Activated naive CD4-positive, alpha-beta T cell treated with anti-CD3 and anti-CD28 coated beads, Interleukin-2, amount 10 ng/mL, durations not matched to agents 7 days and 5 days (primary cell): ENCODE measurements at regions of chr14 and their contacts with region 1.

Region 1: DNA sequence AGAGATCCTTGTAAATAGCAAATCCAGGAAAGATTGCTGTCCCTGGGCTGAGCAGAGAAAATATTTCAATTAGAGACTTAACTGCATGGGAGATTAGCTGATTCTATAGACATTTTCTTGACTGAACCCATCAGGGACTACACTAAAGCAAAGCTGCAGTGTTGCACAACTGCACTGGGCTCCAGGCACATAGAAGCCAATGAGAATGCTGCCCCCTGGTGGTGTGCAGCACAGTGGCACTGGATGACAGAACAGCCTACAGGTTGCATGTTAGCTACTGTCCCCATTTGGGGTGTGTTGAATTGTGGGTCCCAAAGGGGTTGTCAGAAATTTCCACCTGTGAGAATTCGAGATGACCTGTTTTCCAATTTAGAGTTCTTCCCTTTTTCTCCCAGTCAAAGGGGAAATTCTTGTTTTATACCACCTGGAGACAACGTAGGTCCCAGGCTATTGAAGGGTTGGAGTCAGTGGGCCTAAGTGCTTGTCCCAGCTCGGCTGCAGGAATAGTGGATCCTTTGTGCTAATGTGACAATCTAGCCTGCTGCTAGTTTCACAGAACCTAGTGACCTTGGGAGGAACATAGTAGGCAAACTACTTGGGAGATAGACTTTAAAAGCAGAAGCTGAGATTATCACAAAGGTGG is 114.7 kb downstream of the SLC8A3 start:
- DNase-seq: peak; percentile 67
- H3K4me3 Mint-ChIP-seq: no peak overlapping the region
- H3K27ac Mint-ChIP-seq: no peak overlapping the region
- H3K4me1 Mint-ChIP-seq: no peaks in the 10 kb centered on the region
- H3K27me3 Mint-ChIP-seq: peaks cover 8% of the 10 kb centered on the region

Region 2: DNA sequence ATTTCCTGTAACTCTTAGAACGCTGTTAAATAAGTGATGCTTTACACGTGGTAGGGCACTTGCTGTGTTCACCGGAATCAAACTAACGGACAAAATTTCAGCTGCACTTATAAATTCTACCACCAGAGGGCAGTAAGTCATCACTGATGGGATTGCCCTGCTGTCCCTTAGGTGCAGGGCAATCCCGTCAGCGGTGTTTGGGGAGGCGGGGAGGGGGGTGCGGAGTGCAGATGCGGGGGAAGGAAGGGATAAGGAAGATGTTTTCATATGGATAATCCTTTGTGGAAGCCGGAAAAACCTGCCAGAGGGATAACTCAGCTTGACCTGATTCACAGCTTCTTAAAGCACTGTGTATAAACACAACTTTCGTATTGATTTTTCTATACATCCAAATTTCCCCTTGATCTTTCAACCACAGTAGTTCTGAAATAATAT is 255.3 kb before region 1 on chr14:
- CTCF ChIA-PET with region 1: interaction called, 11 read pairs
- DNase-seq: peak; percentile 58
- H3K4me3 Mint-ChIP-seq: no peak overlapping the region
- H3K27ac Mint-ChIP-seq: no peak overlapping the region
- H3K4me1 Mint-ChIP-seq: no peaks in the 10 kb centered on the region
- H3K27me3 Mint-ChIP-seq: peaks cover 17% of the 10 kb centered on the region

Region 3: GRCh38 chr14:70036665-70037064 is 37.4 kb before region 1 on chr14:
- CTCF ChIA-PET with region 1: no interaction called
- DNase-seq: no peak
- H3K4me3 Mint-ChIP-seq: no peak overlapping the region
- H3K27ac Mint-ChIP-seq: no peak overlapping the region
- H3K4me1 Mint-ChIP-seq: no peaks in the 10 kb centered on the region
- H3K27me3 Mint-ChIP-seq: no peaks in the 10 kb centered on the region

Region 4: DNA sequence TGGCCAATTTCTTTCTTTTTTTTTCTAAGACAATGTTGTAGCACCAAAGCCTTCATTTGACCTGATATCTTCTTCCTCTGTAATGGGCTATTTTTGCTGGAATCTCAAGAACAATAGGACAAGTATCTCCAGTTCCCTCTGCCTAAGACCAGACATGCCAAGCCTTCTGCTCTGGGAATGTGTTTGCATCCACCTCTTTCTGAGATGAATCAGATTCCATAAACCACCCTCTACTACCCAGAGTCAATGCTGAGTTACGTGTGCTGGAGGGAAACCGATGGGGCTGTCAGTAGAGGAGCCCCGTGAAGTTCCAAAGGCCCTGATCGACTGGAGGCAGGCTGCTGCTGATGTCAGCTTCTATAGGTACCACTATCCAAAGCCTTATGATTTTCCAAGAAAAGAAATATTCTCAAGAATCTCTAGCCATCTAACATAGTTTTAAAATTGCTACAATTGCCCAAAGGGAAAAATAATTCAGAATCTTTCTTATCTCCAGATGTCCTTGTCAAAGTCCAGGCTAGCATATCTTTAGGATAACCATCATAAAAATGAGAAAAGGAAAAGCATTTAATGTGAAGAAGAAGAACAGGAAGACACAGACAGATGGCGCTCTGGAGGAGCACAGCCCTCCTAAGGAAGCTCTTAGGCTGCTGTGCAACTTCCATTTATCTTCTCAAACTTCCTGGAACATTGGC is 12.8 kb after region 1 on chr14:
- CTCF ChIA-PET with region 1: interaction called, 12 read pairs
- DNase-seq: peak; percentile 25
- H3K4me3 Mint-ChIP-seq: no peak overlapping the region
- H3K27ac Mint-ChIP-seq: no peak overlapping the region
- H3K4me1 Mint-ChIP-seq: no peaks in the 10 kb centered on the region
- H3K27me3 Mint-ChIP-seq: peaks cover 12% of the 10 kb centered on the region

Region 5: DNA sequence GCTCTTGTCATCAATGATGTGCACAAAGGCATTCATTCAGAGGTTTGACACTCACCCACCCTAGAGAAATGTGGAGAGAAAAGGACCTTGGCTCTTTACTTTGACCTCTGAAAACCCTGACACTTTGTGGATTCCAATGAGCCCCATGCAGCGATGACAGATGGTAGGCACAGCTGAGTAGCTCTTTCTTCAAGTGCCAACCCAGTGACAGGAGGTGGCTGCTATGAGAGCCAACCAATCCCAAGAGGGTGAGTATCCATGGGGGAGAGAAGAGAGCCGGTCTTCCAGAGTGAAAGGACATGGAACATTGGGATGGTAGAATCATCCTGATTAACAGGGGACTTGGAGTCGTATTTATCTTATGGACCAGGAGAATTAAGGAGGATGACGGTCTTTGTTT is 96.9 kb after region 1 on chr14:
- CTCF ChIA-PET with region 1: no interaction called
- DNase-seq: no peak
- H3K4me3 Mint-ChIP-seq: no peak overlapping the region
- H3K27ac Mint-ChIP-seq: no peak overlapping the region
- H3K4me1 Mint-ChIP-seq: no peaks in the 10 kb centered on the region
- H3K27me3 Mint-ChIP-seq: peaks cover 29% of the 10 kb centered on the region